ENCODE measurements at regions of chr14 and their contacts with region 1.

Region 1: DNA sequence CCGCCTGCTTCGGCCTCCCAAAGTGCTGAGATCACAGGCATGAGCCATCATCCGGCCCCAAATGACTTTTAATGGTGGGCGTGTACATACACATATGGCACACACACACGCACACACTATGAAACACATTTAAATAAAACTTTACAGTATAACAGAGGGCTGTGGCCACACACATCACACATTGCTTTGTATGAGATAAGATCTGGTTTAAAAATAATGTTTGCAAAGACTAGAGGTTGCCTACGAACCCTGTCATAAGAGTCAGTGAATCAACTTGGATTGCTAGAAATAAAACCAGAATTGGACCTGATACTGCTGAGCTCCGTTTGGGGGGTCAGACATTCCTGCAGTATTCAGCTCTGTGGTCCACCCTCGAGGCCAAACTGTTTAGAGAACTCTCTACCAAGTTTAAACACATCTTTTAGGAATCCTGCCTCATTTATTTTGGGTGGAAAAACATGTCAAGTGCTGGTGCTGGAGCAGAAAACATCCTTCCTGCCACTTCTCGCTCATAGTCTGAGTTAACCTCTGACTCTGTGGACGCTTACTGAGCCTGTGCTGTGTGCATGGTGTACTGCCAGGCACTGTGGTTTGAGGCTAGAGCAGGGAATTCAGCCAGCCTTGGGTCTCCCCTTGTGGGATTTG is 47.8 kb upstream of the EML1 start:
- DNase-seq: no peak
- ATAC-seq: no peak
- H3K4me3 ChIP-seq: no peak overlapping the region
- H3K27ac ChIP-seq: no peak overlapping the region
- H3K4me1 ChIP-seq: peaks cover 18% of the 10 kb centered on the region
- H3K27me3 ChIP-seq: no peaks in the 10 kb centered on the region
- CTCF ChIP-seq: no peak

Region 2: DNA sequence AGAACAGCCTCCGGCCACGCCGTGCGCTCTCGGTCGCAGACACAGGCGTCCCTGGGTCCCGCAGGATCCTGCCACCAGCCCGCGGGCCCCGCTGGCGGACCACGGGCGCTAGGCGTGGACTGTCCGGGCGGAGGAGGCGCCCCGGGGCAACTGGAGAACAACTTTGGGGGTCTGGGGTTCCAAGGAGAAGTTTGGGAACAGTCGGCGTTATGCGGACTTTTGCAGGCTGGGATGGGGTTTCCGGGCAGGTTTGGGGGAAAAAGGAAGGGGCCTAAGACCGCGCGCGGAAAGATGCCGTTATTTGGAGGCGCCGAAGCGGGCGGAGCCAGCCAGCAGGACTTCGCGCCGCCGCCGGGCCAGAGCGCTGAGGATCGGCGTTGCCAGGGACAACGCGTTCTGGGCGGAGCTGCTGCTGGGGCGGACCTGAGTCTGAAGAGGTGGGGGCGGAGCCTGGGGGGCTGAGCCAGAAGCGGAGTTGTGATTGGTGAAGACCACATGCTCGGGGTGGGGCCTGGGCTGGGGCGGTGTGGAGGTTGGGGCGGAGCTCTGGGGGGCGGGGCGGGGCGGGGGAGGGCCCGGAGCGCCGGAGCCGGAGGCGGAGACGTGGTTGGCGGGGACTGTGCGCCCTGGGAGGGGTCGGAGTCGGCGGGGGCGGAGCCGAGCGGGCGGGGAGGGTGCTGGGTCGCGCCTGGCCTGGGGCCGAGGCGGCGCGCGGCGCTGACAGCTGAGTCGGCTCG is 61.6 kb before region 1 on chr14 and contains the start of gene CYP46A1:
- CTCF ChIA-PET with region 1: interaction called, 10 read pairs
- POLR2A ChIA-PET with region 1: no interaction called
- in situ Hi-C with region 1: no loop called
- intact Hi-C with region 1: no loop called
- DNase-seq: peak; percentile 84
- ATAC-seq: peak; percentile 91
- H3K4me3 ChIP-seq: peak within 1 kb of the TSS; percentile 82 to 91
- H3K27ac ChIP-seq: peak within 1 kb of the TSS; percentile 81
- H3K4me1 ChIP-seq: no peaks in the 10 kb centered on the region
- H3K27me3 ChIP-seq: no peaks in the 10 kb centered on the region; the same call in 1 of the 2 replicates
- CTCF ChIP-seq: no peak
- total RNA-seq, gene CYP46A1: 0.36 TPM